ENCODE measurements at regions of chrX and their contacts with region 1.

Region 1: DNA sequence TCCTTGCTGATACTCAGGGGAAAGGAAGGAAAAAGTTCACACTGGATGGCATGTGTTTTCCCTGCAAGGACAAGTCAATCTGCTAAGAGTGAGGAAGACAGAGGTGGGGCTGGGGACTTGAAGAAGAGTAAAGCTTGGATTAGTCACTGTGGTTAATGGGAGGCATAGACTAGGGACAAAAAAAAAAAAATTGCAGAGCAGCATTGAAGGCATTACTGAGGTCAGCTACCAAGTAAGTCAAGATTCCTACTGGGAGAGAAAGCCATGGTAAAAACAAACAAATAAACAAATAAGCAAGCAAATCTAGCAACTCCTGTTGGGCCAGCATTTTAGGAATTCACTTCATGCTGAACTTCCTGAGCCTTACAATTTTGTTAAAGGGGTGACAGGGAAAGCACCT is 58.2 kb upstream of the GPC4 start:
- DNase-seq: no peak

Region 2: GRCh38 chrX:133444951-133445831 is 28.3 kb before region 1 on chrX:
- intact Hi-C with region 1: loop called in 1 of 2 experiments (anchors 1 kb)
- DNase-seq: no peak

Region 3: DNA sequence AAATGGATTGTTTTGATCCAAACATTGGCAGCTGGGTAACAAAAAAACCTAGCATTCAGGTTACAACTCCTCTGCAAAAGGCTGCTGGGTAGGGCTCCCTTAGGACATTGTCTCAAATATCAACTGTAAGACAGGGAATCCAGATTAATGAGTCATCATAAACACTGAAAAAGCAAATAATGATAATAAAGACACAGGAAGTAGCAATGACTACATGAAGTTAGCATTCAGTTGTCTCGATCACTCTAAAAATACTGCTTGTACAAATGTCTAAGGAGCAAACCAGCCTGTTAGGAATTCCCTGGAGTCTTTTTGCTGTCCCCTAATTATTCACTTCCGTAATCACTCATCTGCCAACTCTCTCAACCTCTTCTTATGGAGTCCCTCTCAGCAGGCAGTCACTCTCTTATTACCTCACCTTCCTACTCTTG is 252.8 kb after region 1 on chrX:
- intact Hi-C with region 1: no loop called
- DNase-seq: no peak

Region 4: DNA sequence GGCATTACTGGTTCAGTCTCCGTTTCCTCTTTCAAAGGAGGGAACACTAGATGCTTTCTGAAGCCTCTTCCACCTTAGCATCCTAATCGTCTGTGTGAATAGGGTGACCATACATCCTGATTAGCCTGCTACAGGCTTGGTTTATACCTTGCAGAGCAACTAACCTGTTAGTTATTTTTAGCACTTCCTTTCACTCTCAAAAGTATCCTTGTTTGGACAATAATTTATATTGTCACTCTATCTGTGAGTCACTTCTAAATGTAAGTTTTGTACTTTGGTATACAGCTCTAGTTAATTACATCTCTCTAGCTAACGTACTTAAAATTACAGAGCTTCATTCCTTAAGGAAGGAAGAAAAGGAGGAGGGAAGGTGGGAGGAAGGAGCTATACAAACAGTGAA is 337.5 kb after region 1 on chrX:
- intact Hi-C with region 1: no loop called
- DNase-seq: no peak